ENCODE measurements at regions of chr12 and their contacts with region 1.

Region 1: GRCh38 chr12:116104167-116104767 is 173.2 kb downstream of the MED13L start:
- DNase-seq: no peak
- ATAC-seq: no peak
- H3K4me3 ChIP-seq: no peak overlapping the region
- H3K27ac ChIP-seq: no peak overlapping the region
- H3K4me1 ChIP-seq: no peaks in the 10 kb centered on the region
- H3K27me3 ChIP-seq: no peaks in the 10 kb centered on the region
- CTCF ChIP-seq: no peak
- EP300 ChIP-seq: no peak
- POLR2A ChIP-seq: no peak
- RAD21 ChIP-seq: no peak

Region 2: DNA sequence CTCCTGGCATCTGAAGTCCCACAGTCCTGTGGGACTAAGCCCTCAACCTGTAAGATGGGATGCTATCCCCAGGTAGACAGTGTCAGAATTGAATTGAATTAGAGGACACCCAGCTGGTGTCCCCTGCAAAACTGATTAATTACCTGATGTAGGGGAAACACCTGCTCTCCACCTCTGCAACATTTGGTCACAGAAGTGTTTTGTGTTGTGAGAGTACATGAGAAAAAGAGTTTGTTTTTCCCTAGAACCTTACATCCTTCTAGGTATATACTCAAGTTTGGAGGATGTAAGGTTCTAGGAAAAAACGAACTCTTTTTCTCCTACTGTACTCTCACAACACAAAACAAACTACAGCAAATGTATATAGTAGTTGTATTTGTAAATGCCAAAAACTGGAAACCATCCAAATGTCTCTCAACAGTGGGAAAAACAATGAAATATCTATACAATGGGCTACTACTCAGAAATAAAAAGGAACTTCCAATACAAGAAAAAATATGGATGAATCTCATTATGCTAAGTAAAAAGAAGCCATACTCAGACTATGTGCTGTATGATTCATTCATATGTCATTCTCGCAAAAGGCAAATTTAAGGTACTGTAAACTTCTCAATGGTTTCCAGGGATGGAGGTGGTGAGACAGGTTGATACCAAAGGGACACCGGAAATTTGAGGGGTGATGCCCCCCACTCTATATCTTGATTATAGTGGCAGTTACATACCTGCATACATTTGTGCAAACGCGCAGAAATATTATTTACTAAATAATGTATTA is 12.6 kb after region 1 on chr12:
- CTCF ChIA-PET with region 1: no interaction called
- POLR2A ChIA-PET with region 1: interaction called, 13 read pairs
- in situ Hi-C with region 1: no loop called
- intact Hi-C with region 1: no loop called
- DNase-seq: no peak
- ATAC-seq: peak; percentile 9; the same call in 1 of the 3 replicates
- H3K4me3 ChIP-seq: no peak overlapping the region
- H3K27ac ChIP-seq: no peak overlapping the region
- H3K4me1 ChIP-seq: peaks cover 2 to 16% of the 10 kb centered on the region in 2 experiments; a peak in 4 of 5 replicates
- H3K27me3 ChIP-seq: no peaks in the 10 kb centered on the region
- CTCF ChIP-seq: no peak
- EP300 ChIP-seq: no peak
- POLR2A ChIP-seq: no peak
- RAD21 ChIP-seq: no peak

Measured in K562 (cell line).